Heart left ventricle (tissue), 16 donors: ENCODE measurements at regions of chr2 and their contacts with region 1.

Region 1: DNA sequence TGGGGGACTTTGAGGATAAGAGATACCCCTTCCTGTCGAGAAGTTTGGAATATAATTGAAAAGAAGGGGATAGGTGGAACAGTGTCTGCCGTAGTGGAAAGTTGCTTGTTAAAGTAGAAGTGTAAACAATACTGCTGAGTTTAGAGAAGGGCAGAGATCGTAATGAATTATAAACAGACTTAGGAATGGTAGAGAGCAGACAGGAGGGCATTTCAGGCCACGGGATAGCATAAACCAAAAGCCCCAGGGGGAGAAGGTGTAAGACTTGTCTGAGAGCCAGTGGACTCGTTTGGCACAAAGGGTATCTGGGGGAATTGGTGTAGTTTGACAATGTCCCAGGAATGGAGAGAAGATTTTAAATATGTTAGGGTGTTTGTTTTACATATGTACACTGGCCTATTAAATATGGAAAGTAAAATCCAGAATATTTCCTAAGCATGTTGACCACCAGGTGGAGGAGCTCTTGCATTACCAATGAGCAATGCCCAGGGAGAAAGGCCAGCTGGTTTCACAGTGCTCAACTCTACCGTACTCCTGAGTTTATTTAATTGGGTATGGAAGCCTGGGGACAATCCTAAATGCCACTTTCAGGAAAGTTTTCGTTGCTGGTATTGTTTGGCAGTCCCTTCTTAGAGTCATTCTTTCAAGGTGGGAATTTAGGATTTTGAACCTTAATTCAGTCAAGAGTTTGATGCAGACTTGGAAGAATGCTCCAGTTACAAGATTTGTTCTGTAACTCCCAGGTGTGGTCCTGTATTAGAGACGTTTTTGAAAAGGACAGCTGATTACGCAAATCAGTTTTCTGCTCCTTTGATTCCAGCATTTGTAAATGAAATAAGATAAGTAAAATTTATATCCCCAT is 7.5 kb downstream of the COPS8 start:
- DNase-seq: peak in 3 of 5 donors; percentile 40 to 52 (median 43)
- ATAC-seq: peak; percentile 55 to 82 (median 77)
- H3K4me3 ChIP-seq: no peak overlapping the region
- H3K27ac ChIP-seq: peak overlapping the region in 5 of 12 donors; percentile 18 to 56 (median 53)
- H3K4me1 ChIP-seq: peaks cover 0 to 35% (median 19%) of the 10 kb centered on the region in 12 donors
- H3K27me3 ChIP-seq: no peaks in the 10 kb centered on the region
- CTCF ChIP-seq: peak; percentile 14 to 62 (median 48)
- POLR2A ChIP-seq: no peak

Region 2: DNA sequence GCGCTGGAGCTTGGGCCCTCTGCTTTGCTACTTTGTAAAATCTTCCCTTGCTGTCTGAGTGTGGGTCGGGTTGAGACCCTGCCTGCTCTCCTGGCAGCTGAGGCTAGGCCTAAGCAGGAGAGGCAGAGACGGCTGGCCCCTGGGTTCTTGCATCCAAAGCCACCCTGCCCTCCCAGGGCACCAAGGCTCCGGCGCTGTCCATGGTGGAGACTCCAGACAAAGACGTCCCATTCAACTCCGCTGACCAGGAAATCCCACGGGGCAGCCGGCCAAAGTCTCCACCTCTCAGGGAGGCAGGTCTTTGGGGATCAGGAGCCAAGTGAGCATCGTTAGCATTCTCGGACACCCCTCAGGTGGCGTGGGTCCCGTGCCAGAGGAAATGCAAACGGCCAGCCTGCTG is 470.7 kb after region 1 on chr2:
- intact Hi-C with region 1: loop called in 1 of 10 experiments (anchors 10 kb)
- DNase-seq: peak in 1 of 5 donors; percentile 39
- ATAC-seq: peak in 1 of 4 donors; percentile 24
- H3K4me3 ChIP-seq: no peak overlapping the region
- H3K27ac ChIP-seq: no peak overlapping the region
- H3K4me1 ChIP-seq: peaks cover 0 to 8% (median 5%) of the 10 kb centered on the region in 12 donors
- H3K27me3 ChIP-seq: peaks cover 0 to 14% (median 0%) of the 10 kb centered on the region in 9 donors
- CTCF ChIP-seq: no peak
- POLR2A ChIP-seq: no peak